Activated CD8-positive, alpha-beta T cell treated with anti-CD3 and anti-CD28 coated beads for 36 hours (primary cell): ENCODE measurements at regions of chr12 and their contacts with region 1.

Region 1: DNA sequence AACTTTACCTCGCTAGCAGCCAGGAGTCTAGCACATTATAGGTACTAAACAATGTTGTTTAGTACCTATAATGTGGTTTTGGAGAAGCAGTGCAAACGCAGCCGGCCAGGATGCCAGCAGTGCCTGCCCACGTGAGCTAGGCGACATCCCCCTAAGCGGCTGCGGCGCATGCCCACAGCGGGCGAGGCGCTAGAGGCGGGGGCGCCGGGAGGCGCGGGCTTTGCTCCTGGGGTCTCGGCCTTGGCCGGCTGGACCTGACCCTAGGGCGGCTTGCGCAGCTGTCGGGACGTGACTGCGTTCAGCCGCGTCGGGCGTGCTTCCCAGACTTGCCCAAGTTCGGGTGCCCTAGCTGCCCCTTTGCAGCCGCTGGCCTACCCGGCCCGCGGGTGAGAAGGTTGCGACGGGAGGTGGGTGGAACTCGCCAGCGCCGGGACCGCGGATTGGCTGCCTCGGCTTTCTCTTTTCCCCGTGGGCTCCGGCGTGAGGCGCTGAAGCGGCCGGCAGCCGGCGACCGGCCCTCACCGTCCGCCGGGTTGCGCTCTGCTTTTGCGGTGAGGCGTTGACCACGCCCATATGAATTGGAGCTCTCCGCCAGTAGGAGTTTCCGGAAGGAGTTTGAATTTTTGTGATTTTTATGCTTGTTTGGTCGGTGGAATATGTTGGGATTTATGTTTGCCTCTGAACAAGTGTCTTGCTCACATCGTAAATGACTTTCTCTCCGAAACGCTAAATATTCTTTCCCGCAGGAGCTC is at the start of gene TMEM19:
- DNase-seq: peak; percentile 86
- ATAC-seq: peak; percentile 89
- H3K4me3 Mint-ChIP-seq: peak within 1 kb of the TSS; percentile 94
- H3K27ac Mint-ChIP-seq: peak within 1 kb of the TSS; percentile 94
- H3K4me1 Mint-ChIP-seq: peaks cover 19% of the 10 kb centered on the region
- H3K27me3 Mint-ChIP-seq: no peaks in the 10 kb centered on the region
- CTCF ChIP-seq: no peak
- total RNA-seq, gene TMEM19: 14.2 to 16.5 TPM

Region 2: DNA sequence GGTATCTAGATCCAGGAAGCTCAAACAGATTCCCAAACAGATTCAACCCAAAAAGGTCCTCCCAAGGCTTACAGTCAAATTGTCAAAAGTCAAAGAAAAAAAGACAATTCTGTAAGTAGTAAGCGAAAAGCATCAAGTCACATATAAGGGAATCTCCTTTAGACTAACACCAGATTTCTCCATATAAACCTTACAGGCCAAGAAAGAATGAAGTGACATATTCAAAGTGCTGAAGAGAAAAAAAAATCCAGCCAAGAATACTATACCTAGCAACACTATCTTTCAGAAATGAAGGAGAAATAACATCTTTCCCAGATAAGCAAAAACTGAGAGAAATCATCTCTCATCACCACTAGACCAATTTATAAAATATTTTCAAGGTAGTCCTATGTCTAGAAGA is 326.1 kb before region 1 on chr12:
- CTCF ChIA-PET with region 1: no interaction called
- POLR2A ChIA-PET with region 1: no interaction called
- intact Hi-C with region 1: no loop called
- DNase-seq: no peak
- ATAC-seq: no peak
- H3K4me3 Mint-ChIP-seq: no peak overlapping the region
- H3K27ac Mint-ChIP-seq: no peak overlapping the region
- H3K4me1 Mint-ChIP-seq: no peaks in the 10 kb centered on the region
- H3K27me3 Mint-ChIP-seq: no peaks in the 10 kb centered on the region
- CTCF ChIP-seq: no peak

Region 3: GRCh38 chr12:71671816-71672215 is 14.3 kb before region 1 on chr12:
- CTCF ChIA-PET with region 1: interaction called, 11 read pairs
- POLR2A ChIA-PET with region 1: interaction called, 6 read pairs
- intact Hi-C with region 1: no loop called
- DNase-seq: no peak
- ATAC-seq: no peak
- H3K4me3 Mint-ChIP-seq: no peak overlapping the region
- H3K27ac Mint-ChIP-seq: no peak overlapping the region
- H3K4me1 Mint-ChIP-seq: peaks cover 20% of the 10 kb centered on the region
- H3K27me3 Mint-ChIP-seq: no peaks in the 10 kb centered on the region
- CTCF ChIP-seq: no peak